ENCODE measurements at regions of chr11 and their contacts with region 1.

Region 1: DNA sequence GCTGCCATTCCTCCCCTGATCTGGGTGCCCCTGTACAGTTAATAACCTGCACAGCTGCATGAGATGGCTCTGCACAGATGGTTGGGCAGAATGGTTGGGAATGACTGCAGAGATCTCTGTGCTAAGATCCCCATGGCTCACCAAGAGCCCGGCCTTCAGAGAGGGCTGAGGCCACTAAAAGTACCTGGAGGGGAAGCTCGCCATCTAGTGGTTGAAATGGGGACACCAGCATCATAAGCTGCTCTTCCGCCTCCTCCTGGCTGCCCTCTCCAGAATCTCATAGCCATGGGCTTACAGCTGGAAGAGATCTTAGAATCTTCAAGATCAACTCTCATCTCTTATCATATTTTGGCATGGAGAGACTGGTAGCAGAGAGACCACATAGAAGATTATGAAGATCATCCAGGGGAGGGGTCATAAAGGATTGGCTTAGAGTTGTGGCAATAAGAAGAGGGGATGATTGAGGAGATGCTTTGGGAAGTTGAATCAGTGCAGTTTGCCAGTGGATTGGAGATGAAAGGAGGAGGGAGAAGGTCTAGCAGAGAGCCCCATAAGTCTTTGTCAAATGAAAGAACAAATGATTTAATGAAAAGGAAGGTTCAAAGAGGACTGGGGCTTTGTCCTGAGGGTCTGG is 22.0 kb upstream of the TLCD5 start:
- DNase-seq: peak; percentile 79
- H3K4me3 ChIP-seq: no peak overlapping the region
- H3K27ac ChIP-seq: no peak overlapping the region
- H3K4me1 ChIP-seq: no peaks in the 10 kb centered on the region
- H3K27me3 ChIP-seq: no peaks in the 10 kb centered on the region
- CTCF ChIP-seq: peak; percentile 64 to 81 (median 72)
- EP300 ChIP-seq: no peak
- POLR2A ChIP-seq: no peak

Region 2: DNA sequence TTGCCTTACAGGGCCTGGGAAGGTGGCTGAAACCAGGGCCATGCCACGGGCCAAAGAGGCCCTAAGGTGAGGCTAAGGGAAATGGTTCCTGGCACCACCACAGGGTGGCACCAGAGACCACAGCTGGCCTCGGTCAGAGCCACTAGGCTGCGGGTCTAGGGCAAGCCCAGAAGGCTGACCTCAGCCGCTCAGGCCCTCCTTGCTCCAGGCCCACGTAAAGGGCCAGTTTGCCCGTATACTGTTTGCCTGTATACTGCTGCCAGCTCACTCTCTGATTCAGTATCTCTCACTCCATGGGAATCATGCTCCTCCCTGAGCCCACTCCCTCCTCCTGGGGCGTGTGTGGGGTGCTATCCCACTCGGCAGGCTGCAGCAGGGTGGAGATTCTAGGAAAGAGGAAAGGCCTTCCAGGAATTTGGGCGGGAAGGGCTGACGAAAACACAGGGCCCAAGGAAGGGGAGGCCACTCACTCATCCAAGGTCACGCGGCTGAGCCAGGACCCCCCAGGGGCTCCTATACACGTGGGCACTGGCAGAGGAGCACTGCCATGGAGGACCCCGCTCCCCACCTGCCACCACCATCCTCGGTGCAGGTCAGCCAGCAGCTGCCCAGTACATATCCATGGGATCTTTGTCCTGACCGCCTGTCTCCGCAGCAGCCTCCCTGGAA is 636.5 kb before region 1 on chr11:
- intact Hi-C with region 1: loop called (anchors 5 kb)
- DNase-seq: peak; percentile 82
- H3K4me3 ChIP-seq: no peak overlapping the region
- H3K27ac ChIP-seq: no peak overlapping the region
- H3K4me1 ChIP-seq: peaks cover 0 to 10% (median 8%) of the 10 kb centered on the region in 4 donors
- H3K27me3 ChIP-seq: no peaks in the 10 kb centered on the region
- CTCF ChIP-seq: peak; percentile 88 to 94 (median 93)
- EP300 ChIP-seq: no peak
- POLR2A ChIP-seq: no peak

Region 3: GRCh38 chr11:120172054-120172911 is 130.8 kb before region 1 on chr11:
- intact Hi-C with region 1: loop called (anchors 1 kb)
- DNase-seq: peak; percentile 87
- H3K4me3 ChIP-seq: no peak overlapping the region
- H3K27ac ChIP-seq: no peak overlapping the region
- H3K4me1 ChIP-seq: peaks cover 0 to 18% (median 18%) of the 10 kb centered on the region in 4 donors
- H3K27me3 ChIP-seq: peaks cover 0 to 27% (median 12%) of the 10 kb centered on the region in 3 donors
- CTCF ChIP-seq: peak; percentile 56 to 80 (median 76)
- EP300 ChIP-seq: no peak
- POLR2A ChIP-seq: no peak

Region 4: GRCh38 chr11:120235024-120235861 is 67.9 kb before region 1 on chr11:
- intact Hi-C with region 1: loop called (anchors 2 kb)
- DNase-seq: no peak
- H3K4me3 ChIP-seq: no peak overlapping the region
- H3K27ac ChIP-seq: no peak overlapping the region
- H3K4me1 ChIP-seq: peaks cover 0 to 7% (median 6%) of the 10 kb centered on the region in 4 donors
- H3K27me3 ChIP-seq: peaks cover 11 to 30% (median 16%) of the 10 kb centered on the region in 3 donors
- CTCF ChIP-seq: peak in 3 of 4 experiments; percentile 52 to 69 (median 61)
- EP300 ChIP-seq: no peak
- POLR2A ChIP-seq: no peak

Region 5: DNA sequence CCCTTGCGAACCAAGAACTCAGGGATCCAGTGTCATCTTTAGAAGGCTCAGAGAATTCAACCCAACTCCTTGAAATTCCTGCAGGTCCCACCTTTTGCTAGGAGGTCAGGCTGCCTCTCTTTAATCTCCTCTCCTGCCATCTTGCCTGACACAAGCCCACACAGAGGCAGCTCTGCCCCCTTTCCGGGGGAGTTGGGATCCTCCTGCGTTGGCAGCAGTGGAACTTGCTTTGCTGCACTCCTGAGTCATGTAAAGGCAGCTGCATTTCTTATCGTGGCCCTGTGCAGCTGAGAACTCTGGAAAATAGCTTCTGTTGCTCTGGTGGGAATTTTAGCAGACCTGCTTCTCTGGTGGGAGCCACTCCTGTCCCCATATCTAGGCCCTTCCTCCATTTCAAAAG is 578.5 kb after region 1 on chr11:
- intact Hi-C with region 1: no loop called
- DNase-seq: no peak
- H3K4me3 ChIP-seq: no peak overlapping the region
- H3K27ac ChIP-seq: no peak overlapping the region
- H3K4me1 ChIP-seq: no peaks in the 10 kb centered on the region
- H3K27me3 ChIP-seq: no peaks in the 10 kb centered on the region
- CTCF ChIP-seq: no peak
- EP300 ChIP-seq: no peak
- POLR2A ChIP-seq: no peak

Measured in sigmoid colon (tissue), 7 donors.